ENCODE measurements at regions of chr7 and their contacts with region 1.

Region 1: DNA sequence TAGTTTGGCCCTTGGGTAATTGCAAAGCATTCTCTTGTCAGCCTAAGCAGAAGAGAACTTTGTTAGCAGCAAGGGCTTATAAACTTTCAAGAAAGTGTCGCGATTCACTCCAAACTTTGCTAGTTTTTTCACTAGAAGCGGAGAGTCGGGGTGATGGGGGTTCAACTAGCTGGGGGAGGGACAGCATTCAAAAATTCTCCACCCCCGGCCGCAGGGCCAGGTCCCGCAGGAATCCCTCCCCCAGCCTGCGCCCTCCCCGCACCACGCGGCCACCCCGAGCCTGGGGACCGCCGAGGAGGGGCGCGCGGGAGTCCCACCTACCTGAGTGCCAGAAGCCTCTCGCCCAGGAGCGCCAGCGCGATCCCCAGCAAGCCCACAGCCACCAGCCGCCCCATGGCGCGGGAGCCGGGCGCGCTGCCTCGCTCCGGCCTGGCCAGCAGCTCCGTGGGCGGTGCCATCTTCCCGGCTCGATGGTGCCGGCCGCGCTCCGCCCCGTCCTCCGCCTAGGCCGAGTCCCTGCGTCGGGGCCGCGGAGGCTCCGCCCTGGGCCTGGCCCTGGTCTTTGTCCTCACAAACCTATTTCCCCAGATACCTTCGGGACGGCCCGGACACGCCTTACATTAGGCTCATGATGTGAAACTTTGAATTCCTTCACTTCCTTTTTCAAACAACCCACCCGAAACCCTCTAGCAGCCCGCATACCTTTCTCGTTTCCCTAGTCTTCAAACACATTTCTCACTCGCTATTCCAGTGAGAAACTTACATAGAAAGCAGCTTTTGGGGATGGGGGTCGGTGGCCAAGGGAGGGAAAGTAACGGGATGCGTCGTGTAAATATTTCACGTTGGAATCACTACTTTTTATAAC is at the start of gene PON2:
- DNase-seq: peak; percentile 80 to 91 (median 89)
- ATAC-seq: peak; percentile 94 to 100 (median 99)
- H3K4me3 ChIP-seq: peak within 1 kb of the TSS; percentile 68 to 89 (median 79)
- H3K27ac ChIP-seq: peak within 1 kb of the TSS; percentile 83 to 97 (median 92)
- H3K4me1 ChIP-seq: peaks cover 0 to 15% (median 10%) of the 10 kb centered on the region in 12 donors
- H3K27me3 ChIP-seq: no peaks in the 10 kb centered on the region
- CTCF ChIP-seq: peak in 3 of 12 donors; percentile 5 to 17 (median 11)
- POLR2A ChIP-seq: peak in 1 of 2 donors; percentile 65
- total RNA-seq, gene PON2: 26.3 to 50.6 (median 35.7) TPM

Region 2: GRCh38 chr7:95303038-95303905 is 131.5 kb before region 1 on chr7:
- intact Hi-C with region 1: no loop called
- DNase-seq: no peak
- ATAC-seq: no peak
- H3K4me3 ChIP-seq: no peak overlapping the region
- H3K27ac ChIP-seq: no peak overlapping the region
- H3K4me1 ChIP-seq: no peaks in the 10 kb centered on the region
- H3K27me3 ChIP-seq: no peaks in the 10 kb centered on the region
- CTCF ChIP-seq: no peak
- POLR2A ChIP-seq: no peak

Region 3: GRCh38 chr7:95404316-95404865 is 30.4 kb before region 1 on chr7:
- intact Hi-C with region 1: no loop called
- DNase-seq: peak in 4 of 5 donors; percentile 19 to 40 (median 27)
- ATAC-seq: peak; percentile 51 to 87 (median 78)
- H3K4me3 ChIP-seq: no peak overlapping the region
- H3K27ac ChIP-seq: peak overlapping the region in 2 of 12 donors; percentile 15 to 25
- H3K4me1 ChIP-seq: peaks cover 0 to 13% (median 0%) of the 10 kb centered on the region in 12 donors
- H3K27me3 ChIP-seq: no peaks in the 10 kb centered on the region
- CTCF ChIP-seq: no peak
- POLR2A ChIP-seq: no peak

Region 4: DNA sequence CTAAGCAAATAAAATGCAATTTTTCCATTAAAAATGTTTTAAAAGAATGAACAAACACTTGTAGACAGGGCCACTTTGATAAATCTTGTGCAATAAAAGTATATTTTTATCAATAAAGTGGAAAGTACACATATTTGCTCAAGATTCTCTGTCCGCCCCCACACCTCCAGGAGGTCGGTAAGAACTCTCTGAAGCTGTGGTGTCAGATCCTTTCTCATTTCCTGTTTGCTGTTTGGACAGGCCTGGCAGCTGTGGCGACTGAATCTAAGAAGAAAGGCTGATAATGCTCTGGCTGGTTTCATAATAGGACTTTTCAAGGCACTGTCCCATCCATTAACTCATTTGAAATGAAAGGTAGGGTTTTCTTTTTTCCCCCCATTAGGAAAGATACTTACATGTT is 35.7 kb after region 1 on chr7:
- intact Hi-C with region 1: loop called in 1 of 10 experiments (anchors 5 kb)
- DNase-seq: no peak
- ATAC-seq: peak in 2 of 4 donors; percentile 47 to 58
- H3K4me3 ChIP-seq: no peak overlapping the region
- H3K27ac ChIP-seq: no peak overlapping the region
- H3K4me1 ChIP-seq: peaks cover 0 to 13% (median 0%) of the 10 kb centered on the region in 12 donors
- H3K27me3 ChIP-seq: no peaks in the 10 kb centered on the region
- CTCF ChIP-seq: no peak
- POLR2A ChIP-seq: no peak